Heart right ventricle (tissue), 16 donors: ENCODE measurements at regions of chr15 and their contacts with region 1.

Region 1: DNA sequence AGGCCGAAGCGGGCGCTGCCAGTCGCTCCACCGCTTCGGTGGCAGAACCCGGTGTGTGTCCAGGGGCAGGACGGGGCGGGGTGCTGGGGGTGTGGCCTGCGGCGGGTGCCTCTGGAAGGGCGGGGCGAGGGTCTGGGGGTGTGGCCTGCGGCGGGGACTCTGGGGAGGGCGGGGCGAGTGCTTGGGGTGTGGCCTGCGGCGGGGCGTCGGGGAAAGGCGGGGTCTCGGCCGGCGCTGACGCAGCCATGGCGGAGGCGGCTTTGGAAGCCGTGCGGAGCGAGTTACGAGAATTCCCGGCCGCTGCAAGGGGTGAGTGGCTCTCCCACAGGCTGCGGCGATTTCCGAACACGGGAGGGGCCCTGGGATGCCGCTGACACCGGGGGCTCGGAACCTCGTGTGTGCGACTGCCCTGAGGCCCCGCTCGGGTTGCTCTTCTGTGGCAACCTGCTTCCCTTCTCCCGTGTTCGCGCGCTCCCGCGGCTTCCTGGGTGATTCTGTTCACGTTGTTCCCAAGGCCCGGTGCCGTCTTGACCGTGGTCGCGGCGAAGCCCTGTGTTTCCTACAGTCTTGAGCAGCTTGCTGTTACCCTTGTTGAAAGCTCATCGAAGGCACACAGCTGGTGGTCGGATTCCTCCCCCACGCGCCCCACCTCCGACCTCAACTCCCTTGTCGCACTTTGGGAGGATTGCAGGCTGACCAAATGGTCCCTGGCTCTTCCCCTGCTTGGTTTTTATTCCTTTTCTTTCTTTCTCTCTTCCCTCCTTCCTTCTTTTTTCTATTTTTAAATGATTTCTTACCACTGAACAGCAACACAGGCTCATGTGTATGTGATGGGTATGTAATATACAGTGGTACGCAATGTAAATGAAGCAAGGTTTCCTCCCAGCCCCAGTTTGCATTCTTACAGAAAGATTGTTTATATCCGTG is at the start of gene JMJD7:
- DNase-seq: peak; percentile 96 to 97
- ATAC-seq: peak; percentile 96 to 98 (median 97)
- H3K4me3 ChIP-seq: peak within 1 kb of the TSS; percentile 60 to 94 (median 73)
- H3K27ac ChIP-seq: peak within 1 kb of the TSS; percentile 50 to 94 (median 90)
- H3K4me1 ChIP-seq: peaks cover 0 to 39% (median 23%) of the 10 kb centered on the region in 9 donors
- H3K27me3 ChIP-seq: no peaks in the 10 kb centered on the region
- CTCF ChIP-seq: no peak
- total RNA-seq, gene JMJD7: 11.0 to 20.9 (median 12.9) TPM

Region 2: GRCh38 chr15:41523097-41523496 is 305.0 kb before region 1 on chr15:
- intact Hi-C with region 1: no loop called
- DNase-seq: no peak
- ATAC-seq: no peak
- H3K4me3 ChIP-seq: no peak overlapping the region
- H3K27ac ChIP-seq: no peak overlapping the region
- H3K4me1 ChIP-seq: no peaks in the 10 kb centered on the region
- H3K27me3 ChIP-seq: no peaks in the 10 kb centered on the region
- CTCF ChIP-seq: no peak

Region 3: GRCh38 chr15:41774062-41774881 is 53.9 kb before region 1 on chr15 and contains the start of gene MAPKBP1:
- intact Hi-C with region 1: loop called in 1 of 10 experiments (anchors 5 kb)
- DNase-seq: peak; percentile 96 to 97
- ATAC-seq: peak; percentile 96 to 99 (median 98)
- H3K4me3 ChIP-seq: peak within 1 kb of the TSS; percentile 45 to 85 (median 77)
- H3K27ac ChIP-seq: peak within 1 kb of the TSS; percentile 52 to 88 (median 84)
- H3K4me1 ChIP-seq: peaks cover 13 to 55% (median 43%) of the 10 kb centered on the region in 9 donors
- H3K27me3 ChIP-seq: no peaks in the 10 kb centered on the region
- CTCF ChIP-seq: peak; percentile 29 to 84 (median 64)
- total RNA-seq, gene MAPKBP1: 8.3 to 17.0 (median 13.3) TPM

Region 4: DNA sequence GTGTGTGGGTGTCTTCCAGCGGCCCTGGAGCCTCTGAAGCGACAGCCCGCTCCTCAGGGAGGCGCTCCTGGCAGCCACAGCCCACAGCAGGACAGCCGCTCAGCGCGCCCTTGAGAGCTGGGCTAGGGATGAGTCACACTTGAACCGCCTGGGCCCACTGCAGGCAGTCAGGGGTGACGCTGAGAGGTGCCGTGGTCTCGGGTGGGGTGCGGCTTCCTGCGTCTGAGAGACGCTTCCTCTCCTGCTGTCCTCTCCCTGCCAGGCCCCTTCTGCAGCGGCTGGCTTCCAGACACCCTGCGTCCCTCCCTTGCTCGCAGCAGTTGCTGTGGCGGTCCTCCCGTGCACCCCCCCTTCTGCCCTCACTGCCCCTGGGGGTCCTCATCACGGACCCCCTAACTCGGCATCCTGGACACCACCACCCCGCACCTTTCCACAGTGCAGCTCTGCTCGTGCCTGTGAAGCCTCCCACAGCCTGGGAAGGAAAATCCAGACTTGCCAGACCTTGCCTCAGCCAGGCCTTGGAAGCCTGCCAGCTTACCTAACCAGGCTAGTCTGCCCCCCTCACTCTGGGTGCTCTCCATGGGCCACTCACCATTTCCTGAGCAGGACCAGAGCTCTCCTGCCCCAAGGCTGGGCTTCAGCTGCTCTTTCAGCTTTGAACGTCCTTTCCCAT is 66.8 kb after region 1 on chr15:
- intact Hi-C with region 1: loop called in 6 of 10 experiments (anchors 5 to 10 kb)
- DNase-seq: peak; percentile 82 to 86
- ATAC-seq: peak; percentile 74 to 92 (median 88)
- H3K4me3 ChIP-seq: peak overlapping the region in 9 of 10 donors; percentile 26 to 55 (median 51)
- H3K27ac ChIP-seq: peak overlapping the region; percentile 77 to 93 (median 86)
- H3K4me1 ChIP-seq: peaks cover 19 to 43% (median 30%) of the 10 kb centered on the region in 9 donors
- H3K27me3 ChIP-seq: no peaks in the 10 kb centered on the region
- CTCF ChIP-seq: peak in 5 of 9 donors; percentile 17 to 52 (median 40)

Region 5: GRCh38 chr15:41904541-41905005 is 76.4 kb after region 1 on chr15:
- intact Hi-C with region 1: loop called in 4 of 10 experiments (anchors 5 to 10 kb)
- DNase-seq: peak in 1 of 2 donors; percentile 70
- ATAC-seq: peak; percentile 56 to 79 (median 69)
- H3K4me3 ChIP-seq: no peak overlapping the region
- H3K27ac ChIP-seq: peak overlapping the region in 9 of 10 donors; percentile 9 to 70 (median 48)
- H3K4me1 ChIP-seq: peaks cover 3 to 50% (median 37%) of the 10 kb centered on the region in 9 donors
- H3K27me3 ChIP-seq: no peaks in the 10 kb centered on the region
- CTCF ChIP-seq: peak; percentile 68 to 88 (median 85)

Region 6: DNA sequence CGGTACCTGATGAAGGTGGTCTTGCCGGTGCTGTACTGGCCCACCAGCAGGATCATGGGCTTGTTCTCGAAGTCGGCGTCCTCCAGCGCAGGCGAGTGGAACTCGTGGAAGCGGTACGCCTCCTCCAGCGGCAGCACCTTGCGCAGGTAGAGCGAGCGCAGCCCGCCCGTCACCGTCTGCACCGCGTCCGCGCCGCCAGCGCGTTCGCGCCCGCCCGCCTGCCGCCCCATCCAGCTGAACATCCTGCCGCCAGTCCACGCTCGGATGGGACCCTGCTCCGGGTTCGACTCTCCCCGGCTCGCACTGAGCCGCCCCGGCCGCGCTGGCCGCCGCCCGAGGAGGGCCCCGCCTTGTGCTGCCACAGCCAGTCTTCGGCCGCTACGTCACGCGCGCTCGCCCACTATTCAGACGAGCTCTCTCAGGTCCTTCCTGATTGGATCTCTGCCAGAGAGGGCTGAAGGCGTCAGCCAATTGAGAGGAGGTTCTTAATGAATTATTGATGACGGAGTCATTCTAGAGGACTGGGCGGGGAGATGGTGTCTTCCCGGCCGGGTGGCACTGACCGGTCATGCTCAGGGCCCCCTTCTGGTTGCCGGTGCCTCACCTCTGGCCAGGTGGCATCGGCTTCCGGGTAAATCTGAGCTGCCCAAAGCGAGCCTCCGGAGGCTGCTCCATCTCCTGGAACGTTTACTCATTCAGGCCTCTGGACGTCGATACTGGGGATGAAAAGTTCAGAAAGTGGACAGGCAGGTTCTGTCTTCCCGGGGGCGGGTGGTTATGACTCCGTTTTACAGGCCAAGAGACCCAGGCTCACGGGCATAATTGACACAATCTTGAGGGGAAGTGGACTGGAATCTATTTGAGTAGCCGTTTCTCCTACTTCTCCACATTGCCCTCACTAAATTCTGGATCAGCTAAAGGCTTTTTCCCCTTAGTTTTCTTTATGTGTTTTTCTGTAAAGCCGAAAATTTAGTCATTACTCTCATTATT is 144.4 kb after region 1 on chr15 and contains the start of gene EHD4:
- intact Hi-C with region 1: loop called in 5 of 10 experiments (anchors 5 to 10 kb)
- DNase-seq: peak; percentile 98 to 99
- ATAC-seq: peak; percentile 93 to 97 (median 95)
- H3K4me3 ChIP-seq: peak within 1 kb of the TSS; percentile 90 to 98 (median 96)
- H3K27ac ChIP-seq: peak within 1 kb of the TSS; percentile 57 to 99 (median 96)
- H3K4me1 ChIP-seq: peaks cover 0 to 48% (median 38%) of the 10 kb centered on the region in 9 donors
- H3K27me3 ChIP-seq: no peaks in the 10 kb centered on the region
- CTCF ChIP-seq: peak; percentile 15 to 75 (median 40)
- total RNA-seq, gene EHD4: 29.8 to 62.7 (median 46.6) TPM

Region 7: GRCh38 chr15:41989259-41989933 is 161.3 kb after region 1 on chr15:
- intact Hi-C with region 1: loop called in 1 of 10 experiments (anchors 5 kb)
- DNase-seq: peak; percentile 87 to 89
- ATAC-seq: peak; percentile 82 to 95 (median 90)
- H3K4me3 ChIP-seq: no peak overlapping the region
- H3K27ac ChIP-seq: no peak overlapping the region
- H3K4me1 ChIP-seq: peaks cover 0 to 9% (median 0%) of the 10 kb centered on the region in 9 donors
- H3K27me3 ChIP-seq: peaks cover 0 to 3% (median 0%) of the 10 kb centered on the region in 7 donors
- CTCF ChIP-seq: peak; percentile 97 to 99 (median 99)